ENCODE measurements at regions of chr19 and their contacts with region 1.

Region 1: DNA sequence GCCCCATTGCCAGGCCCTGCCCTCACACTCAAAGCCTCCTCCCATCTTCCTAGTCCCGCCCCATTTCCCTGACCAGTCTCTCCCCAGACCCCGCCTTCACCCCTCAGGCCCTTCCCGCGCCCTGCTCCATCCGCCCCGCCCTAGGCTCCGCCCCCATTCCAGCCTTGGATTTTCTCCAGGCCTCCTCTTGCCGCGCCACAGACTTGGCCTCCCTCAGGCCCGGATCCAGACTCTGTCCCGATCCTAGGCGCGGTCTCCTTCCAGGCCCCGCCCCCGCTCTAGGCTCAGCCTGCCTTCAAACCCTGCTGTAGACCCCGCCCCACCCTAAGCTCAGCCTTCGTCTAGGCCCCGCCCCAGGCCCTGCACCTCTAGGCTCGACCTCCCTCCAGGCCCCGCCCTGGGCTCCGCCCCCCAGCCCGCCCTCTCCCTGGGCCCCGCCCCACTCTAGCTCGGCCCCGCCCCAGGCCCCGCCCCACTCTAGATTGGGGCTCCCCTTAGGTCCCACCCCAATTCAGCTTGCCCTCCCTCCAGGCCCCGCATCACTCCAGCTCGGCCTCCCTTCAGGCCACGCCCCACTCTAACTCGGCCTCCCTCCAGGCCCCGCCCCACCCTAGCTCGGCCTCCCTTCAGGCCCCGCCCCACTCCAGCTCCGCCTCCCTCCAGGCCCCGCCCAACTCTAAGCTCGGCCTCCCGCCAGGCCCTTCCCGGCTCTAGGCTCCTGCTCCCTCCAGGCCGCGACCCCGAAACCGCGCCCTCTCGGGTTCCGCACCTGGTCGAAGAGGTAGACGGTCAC is 18.5 kb downstream of the LMTK3 start:
- DNase-seq: peak; percentile 99
- H3K4me3 Mint-ChIP-seq: peak overlapping the region; percentile 81
- H3K27ac Mint-ChIP-seq: peak overlapping the region; percentile 5
- H3K4me1 Mint-ChIP-seq: peaks cover 20% of the 10 kb centered on the region
- H3K27me3 Mint-ChIP-seq: no peaks in the 10 kb centered on the region
- CTCF ChIP-seq: no peak

Region 2: DNA sequence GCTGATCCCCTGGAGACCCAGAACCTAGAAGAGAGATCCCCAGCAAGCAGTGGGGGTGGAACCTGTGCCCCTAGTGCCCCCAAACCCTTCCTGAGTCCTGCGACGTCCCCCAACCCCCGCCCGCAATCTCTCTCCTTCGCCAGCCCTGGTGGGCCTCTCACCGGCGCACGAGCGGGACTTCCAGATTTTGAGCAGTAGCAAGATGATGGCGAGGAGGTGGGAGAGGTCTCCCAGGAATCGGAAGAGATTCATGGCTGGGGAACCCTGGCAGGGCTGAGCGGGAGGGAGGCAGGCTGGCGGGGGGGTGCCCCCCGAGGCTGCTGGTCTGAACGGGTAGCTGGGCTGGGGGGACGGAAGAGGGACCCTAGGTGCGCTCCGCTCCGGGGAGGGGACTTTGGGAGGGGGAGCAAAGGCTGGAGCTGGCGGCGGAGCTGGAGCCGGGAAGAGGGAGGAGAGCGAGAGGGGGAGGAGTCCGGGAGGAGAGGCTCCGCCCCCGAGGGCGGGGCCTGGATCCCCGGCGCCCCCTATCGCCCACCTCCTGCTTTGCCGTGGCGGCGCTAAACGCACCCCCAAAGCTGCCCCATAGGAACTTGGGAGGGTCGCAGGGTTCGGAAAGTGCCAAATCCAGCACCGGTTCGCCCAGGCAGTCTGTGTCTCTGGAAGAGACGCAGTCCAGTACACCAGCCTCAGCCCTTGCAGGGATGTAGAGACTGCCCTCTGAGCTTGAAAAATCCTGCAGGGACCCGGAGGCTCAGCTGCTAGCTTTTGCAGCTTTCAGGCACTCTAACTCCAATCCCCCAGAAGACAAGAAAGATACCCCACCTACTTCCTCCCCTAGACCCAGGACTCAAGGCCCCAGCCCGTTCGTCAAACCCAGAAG is 101.8 kb before region 1 on chr19 and contains the start of gene KDELR1:
- CTCF ChIA-PET with region 1: interaction called, 8 read pairs
- POLR2A ChIA-PET with region 1: interaction called, 3 read pairs
- intact Hi-C with region 1: loop called (anchors 5 kb)
- DNase-seq: peak; percentile 76
- H3K4me3 Mint-ChIP-seq: peak within 1 kb of the TSS; percentile 82
- H3K27ac Mint-ChIP-seq: peak within 1 kb of the TSS; percentile 90
- H3K4me1 Mint-ChIP-seq: peaks cover 25% of the 10 kb centered on the region
- H3K27me3 Mint-ChIP-seq: peaks cover 22% of the 10 kb centered on the region
- CTCF ChIP-seq: peak; percentile 89
- total RNA-seq, gene KDELR1: 113 and 134 TPM in 2 replicates

Region 3: GRCh38 chr19:48445606-48446481 is 47.3 kb before region 1 on chr19 and contains the start of gene GRWD1:
- CTCF ChIA-PET with region 1: interaction called, 5 read pairs
- POLR2A ChIA-PET with region 1: interaction called, 10 read pairs
- intact Hi-C with region 1: no loop called
- DNase-seq: peak; percentile 98
- H3K4me3 Mint-ChIP-seq: peak within 1 kb of the TSS; percentile 93
- H3K27ac Mint-ChIP-seq: peak within 1 kb of the TSS; percentile 94
- H3K4me1 Mint-ChIP-seq: peaks cover 23% of the 10 kb centered on the region
- H3K27me3 Mint-ChIP-seq: no peaks in the 10 kb centered on the region
- CTCF ChIP-seq: peak; percentile 6
- total RNA-seq, gene GRWD1: 45.1 and 55.8 TPM in 2 replicates

Region 4: DNA sequence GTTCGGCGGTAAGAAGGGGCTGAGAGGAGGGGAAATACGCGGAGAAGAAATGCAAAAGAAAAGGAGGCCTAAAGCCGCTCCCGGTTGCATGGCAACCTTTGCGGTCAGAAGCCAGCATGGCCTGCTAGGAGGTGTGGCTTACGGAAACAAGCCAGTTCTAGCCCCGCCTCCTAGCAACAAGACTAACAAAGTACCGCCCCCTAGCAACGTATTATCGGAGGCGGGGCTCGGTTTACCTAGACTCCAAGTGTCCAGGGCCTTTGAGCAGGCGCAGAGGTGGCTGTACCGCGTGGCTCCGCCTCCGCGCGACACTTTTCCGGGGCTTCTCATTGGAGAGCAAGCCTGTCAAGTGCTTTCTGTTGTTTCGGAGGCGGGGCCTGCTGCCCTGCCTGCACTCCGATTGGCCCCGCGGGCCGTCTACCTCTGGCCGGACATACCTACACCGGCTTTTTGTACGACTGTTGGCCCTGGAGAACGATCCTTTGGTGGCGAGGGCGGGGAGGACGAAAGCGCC is 24.3 kb before region 1 on chr19:
- CTCF ChIA-PET with region 1: interaction called, 12 read pairs
- POLR2A ChIA-PET with region 1: interaction called, 22 read pairs
- intact Hi-C with region 1: loop called (anchors 1 kb)
- DNase-seq: peak; percentile 100
- H3K4me3 Mint-ChIP-seq: peak overlapping the region; percentile 77
- H3K27ac Mint-ChIP-seq: peak overlapping the region; percentile 97
- H3K4me1 Mint-ChIP-seq: peaks cover 12% of the 10 kb centered on the region
- H3K27me3 Mint-ChIP-seq: no peaks in the 10 kb centered on the region
- CTCF ChIP-seq: no peak

Region 5: DNA sequence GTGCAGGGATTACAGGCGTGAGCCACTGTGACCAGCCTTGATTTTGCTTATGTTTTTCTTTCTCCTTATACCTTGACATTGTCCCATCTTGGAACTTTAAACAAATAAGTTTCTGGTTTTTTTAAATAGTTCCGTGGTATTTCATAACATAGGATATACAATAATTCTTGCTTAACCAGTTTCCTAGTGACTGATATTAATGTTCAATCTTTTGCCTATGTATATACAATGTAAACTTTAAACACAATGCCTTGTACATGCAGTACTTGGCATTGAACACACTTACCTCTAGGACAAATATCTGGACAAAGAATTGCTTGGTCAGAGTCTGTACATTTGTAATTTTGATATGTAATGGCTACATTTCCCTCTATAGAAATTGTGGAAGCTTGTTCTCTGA is 89.0 kb after region 1 on chr19:
- CTCF ChIA-PET with region 1: interaction called, 41 read pairs
- POLR2A ChIA-PET with region 1: interaction called, 17 read pairs
- intact Hi-C with region 1: loop called (anchors 1 kb)
- DNase-seq: no peak
- H3K4me3 Mint-ChIP-seq: no peak overlapping the region
- H3K27ac Mint-ChIP-seq: no peak overlapping the region
- H3K4me1 Mint-ChIP-seq: peaks cover 7% of the 10 kb centered on the region
- H3K27me3 Mint-ChIP-seq: no peaks in the 10 kb centered on the region
- CTCF ChIP-seq: no peak

Region 6: GRCh38 chr19:48608798-48609263 is 115.7 kb after region 1 on chr19:
- CTCF ChIA-PET with region 1: interaction called, 17 read pairs
- POLR2A ChIA-PET with region 1: interaction called, 3 read pairs
- intact Hi-C with region 1: no loop called
- DNase-seq: peak; percentile 79
- H3K4me3 Mint-ChIP-seq: no peak overlapping the region
- H3K27ac Mint-ChIP-seq: no peak overlapping the region
- H3K4me1 Mint-ChIP-seq: peaks cover 5% of the 10 kb centered on the region
- H3K27me3 Mint-ChIP-seq: no peaks in the 10 kb centered on the region
- CTCF ChIP-seq: peak; percentile 66

Region 7: DNA sequence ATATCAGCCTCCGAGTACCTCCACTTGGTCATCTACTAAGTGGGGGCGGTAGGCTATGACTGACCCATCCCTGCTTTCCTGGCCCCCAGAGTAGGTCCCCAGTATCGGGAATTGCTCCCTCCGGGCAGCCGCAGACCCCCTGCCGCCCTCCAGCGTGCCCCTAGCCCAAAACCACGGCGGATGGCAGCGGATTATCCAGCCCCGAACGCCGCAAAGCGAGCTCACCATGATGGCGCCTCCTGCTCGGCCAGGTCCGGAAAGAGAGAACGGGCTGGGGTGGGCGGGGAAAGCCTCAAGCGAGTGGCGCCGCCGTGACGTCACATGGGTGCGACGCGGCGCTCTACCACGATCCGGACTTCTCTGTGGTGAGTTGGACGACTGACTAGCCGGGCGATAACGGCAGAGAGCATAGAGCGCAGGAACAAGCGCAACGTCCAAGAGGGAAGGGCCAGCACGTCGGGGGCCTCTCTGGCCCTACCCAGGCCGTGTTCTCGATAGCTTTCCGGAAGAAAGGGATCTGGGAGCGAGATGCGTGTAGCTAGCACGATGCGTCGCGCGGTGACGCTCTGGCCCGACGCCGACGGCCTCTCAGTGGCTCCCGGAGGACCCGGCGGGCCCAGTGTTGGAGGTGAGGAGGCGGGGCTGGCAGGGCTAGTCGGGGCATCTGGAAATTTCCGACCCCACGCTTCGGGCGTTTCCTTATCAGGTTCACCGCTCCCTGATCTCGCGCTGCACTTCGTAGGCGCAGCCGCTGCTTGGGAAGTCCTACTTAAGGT is 126.0 kb after region 1 on chr19 and contains the starts of genes RPL18 and SPHK2:
- CTCF ChIA-PET with region 1: interaction called, 3 read pairs
- POLR2A ChIA-PET with region 1: interaction called, 13 read pairs
- intact Hi-C with region 1: no loop called
- DNase-seq: peak; percentile 99
- H3K4me3 Mint-ChIP-seq: peak within 1 kb of the TSS; percentile 87
- H3K27ac Mint-ChIP-seq: peak within 1 kb of the TSS; percentile 96
- H3K4me1 Mint-ChIP-seq: peaks cover 52% of the 10 kb centered on the region
- H3K27me3 Mint-ChIP-seq: no peaks in the 10 kb centered on the region
- CTCF ChIP-seq: no peak
- total RNA-seq, gene RPL18: 1,536 and 1,736 TPM in 2 replicates
- total RNA-seq, gene SPHK2: 16.3 and 18.2 TPM in 2 replicates

Measured in MCF 10A (cell line).